Activated CD4-positive, alpha-beta T cell treated with anti-CD3 and anti-CD28 coated beads, Interleukin-2, amount 10 ng/mL, durations not matched to agents 24 days and 14 days (primary cell): ENCODE measurements at regions of chr12 and their contacts with region 1.

Region 1: DNA sequence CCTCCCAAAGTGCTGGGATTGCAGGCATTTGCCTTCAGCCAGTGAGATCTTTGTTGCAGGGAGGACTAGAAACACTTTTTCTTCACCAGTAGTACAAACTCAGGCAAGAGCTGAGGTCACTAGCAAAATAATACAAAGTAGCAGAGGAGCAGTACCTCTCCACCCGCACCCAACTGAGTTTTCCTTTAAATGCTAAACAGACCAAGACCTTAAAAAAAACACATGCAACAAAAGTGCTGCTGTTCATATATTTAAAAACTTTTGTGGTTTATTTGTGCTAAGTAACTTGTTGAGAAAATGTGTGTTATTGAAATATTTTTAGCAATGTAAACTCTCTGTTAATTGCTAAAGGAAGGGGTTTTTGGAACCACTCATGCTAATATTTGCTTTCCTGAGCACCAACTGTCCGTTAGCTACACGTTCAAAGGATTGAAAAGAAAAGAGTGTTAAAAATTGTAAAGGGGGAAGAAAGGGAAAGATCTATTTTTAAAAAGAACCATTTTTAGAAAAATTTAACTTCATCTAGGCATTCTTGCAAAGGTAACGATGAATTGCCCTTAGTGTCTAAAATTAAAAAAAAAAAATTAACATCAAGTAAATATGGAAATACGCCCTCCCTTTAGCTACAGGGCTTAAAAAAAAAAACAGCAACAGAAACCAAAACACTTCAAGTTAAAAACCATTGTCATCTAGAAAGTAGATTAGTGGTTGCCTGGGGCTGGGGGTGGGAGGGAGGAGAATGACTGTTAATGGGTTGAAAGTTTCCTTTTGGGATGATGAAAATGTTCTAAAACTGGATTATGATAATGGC is 114.0 kb upstream of the KRAS start:
- DNase-seq: no peak
- H3K4me3 Mint-ChIP-seq: peak overlapping the region; percentile 40
- H3K27ac Mint-ChIP-seq: peak overlapping the region; percentile 91
- H3K4me1 Mint-ChIP-seq: peaks cover 15% of the 10 kb centered on the region
- H3K27me3 Mint-ChIP-seq: peaks cover 5% of the 10 kb centered on the region

Region 2: DNA sequence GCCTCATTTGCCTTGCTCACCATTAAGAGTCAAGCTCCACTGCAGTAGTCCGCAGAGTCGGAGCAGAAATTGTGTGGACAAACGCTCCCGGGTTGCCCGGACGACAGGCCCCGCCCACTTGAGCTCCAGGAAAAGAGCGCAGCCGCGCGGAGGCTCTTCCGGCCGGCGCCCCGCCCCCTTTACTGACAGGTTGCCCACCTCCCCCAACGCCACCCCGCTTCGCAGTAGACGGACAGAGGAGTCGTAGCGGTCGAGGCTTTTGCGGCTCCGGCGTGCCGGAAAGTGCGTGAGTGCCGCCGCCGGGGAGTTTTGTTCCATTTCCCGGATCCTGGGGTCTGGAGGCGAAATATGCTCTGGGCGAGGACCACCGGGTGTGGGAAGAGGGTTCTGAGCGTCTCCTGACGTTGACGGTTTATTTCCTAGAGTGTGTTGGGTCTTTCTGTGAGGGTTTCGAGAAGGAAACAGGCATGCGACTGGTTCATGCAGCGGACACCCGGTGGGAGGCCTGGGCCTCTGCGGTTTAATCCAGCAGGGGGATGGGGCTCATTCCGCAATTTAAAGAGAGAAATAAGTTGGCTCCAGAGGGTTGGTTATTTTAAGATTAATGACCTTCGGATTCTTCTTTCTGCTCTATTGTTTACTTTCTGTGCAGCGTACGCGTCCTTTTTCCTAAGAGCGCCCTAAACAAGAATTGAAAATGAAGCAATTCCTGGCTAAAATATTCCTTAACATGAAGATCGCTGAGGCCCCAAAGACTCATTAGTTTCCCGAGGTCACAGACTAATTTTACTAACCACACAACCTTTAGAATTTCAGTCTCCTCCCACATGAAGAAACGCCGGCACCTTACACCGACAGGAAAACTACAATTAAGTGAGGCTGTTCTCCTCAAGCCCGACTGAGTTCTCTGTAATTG is 169.4 kb before region 1 on chr12 and contains the starts of genes DNAI7 and ETFRF1:
- intact Hi-C with region 1: loop called (anchors 2 kb)
- DNase-seq: peak; percentile 98
- H3K4me3 Mint-ChIP-seq: peak within 1 kb of the TSS; percentile 94
- H3K27ac Mint-ChIP-seq: peak within 1 kb of the TSS; percentile 93
- H3K4me1 Mint-ChIP-seq: peaks cover 23% of the 10 kb centered on the region
- H3K27me3 Mint-ChIP-seq: no peaks in the 10 kb centered on the region
- total RNA-seq, gene DNAI7: not detected in 2 replicates
- total RNA-seq, gene ETFRF1: 9.9 TPM in 2 replicates

Region 3: GRCh38 chr12:25250744-25251730 is 113.7 kb before region 1 on chr12 and contains the start of gene KRAS:
- intact Hi-C with region 1: loop called (anchors 1 kb)
- DNase-seq: peak; percentile 97
- H3K4me3 Mint-ChIP-seq: peak within 1 kb of the TSS; percentile 86
- H3K27ac Mint-ChIP-seq: peak within 1 kb of the TSS; percentile 94
- H3K4me1 Mint-ChIP-seq: peaks cover 27% of the 10 kb centered on the region
- H3K27me3 Mint-ChIP-seq: peaks cover 13% of the 10 kb centered on the region
- total RNA-seq, gene KRAS: 26.4 and 27.4 TPM in 2 replicates

Region 4: GRCh38 chr12:25328072-25328712 is 36.5 kb before region 1 on chr12:
- intact Hi-C with region 1: loop called (anchors 1 kb)
- DNase-seq: no peak
- H3K4me3 Mint-ChIP-seq: no peak overlapping the region
- H3K27ac Mint-ChIP-seq: no peak overlapping the region
- H3K4me1 Mint-ChIP-seq: peaks cover 15% of the 10 kb centered on the region
- H3K27me3 Mint-ChIP-seq: peaks cover 15% of the 10 kb centered on the region

Region 5: DNA sequence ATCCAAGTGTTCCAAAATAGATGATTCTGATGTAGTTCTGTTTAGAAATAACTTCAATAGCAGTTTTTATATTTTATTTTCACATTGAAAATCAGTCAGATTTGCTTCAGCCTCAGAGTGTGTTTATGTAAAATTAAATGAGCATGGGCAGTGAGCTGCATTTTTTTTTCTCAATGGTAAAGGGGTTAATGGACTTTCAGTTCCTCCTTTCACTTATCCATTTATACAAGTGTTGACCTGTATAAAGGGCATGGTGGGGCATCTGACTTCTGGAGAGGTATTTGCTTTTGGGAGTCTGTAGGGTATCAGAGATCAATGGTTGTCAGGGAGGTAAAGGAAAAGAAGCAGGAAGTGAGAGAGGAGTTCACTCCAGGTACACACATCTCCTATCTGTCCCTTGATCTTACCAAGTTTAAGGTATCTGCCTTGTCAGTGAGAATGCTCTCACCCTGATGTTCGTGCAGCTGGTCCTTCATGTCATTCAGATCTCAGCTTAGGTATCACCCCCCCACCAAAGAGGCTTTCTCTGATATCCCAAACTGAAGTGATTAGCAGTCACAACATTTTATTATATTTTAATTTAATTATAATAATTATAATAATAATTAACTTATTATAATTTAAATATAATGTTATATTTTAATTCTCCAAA is 369.9 kb after region 1 on chr12:
- intact Hi-C with region 1: no loop called
- DNase-seq: no peak
- H3K4me3 Mint-ChIP-seq: no peak overlapping the region
- H3K27ac Mint-ChIP-seq: no peak overlapping the region
- H3K4me1 Mint-ChIP-seq: no peaks in the 10 kb centered on the region
- H3K27me3 Mint-ChIP-seq: peaks cover 2% of the 10 kb centered on the region